ENCODE measurements at regions of chr19 and their contacts with region 1.

Region 1: DNA sequence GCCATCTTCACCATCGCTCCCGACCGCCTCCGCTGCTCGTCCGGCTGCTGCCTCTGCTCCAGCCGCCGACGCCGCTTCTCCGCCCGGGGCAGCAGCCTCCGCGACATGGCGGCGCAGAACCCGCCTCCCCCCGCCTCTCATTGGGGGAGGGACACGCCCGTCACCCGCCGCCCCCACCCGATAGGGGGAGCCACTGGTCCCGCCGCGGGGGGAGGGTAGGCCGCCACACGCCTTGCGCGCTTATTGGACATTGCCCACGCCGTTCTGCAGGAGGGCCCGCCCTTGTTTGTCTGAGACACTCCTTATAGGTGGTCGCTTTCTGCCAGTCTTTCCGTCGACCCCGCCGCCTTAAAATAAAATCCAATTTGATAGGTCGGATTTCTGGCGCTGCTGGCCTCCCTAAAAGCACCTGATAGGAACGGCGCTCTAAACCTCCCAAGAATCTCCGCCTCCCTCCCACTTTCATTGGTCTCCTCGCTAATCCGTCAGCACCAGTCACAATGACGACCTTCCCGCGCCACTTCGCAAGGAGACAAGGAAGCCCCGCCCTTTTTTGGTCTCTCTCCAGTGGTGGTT is at the start of gene HNRNPL:
- DNase-seq: peak in 6 of 9 experiments; percentile 98 to 100 (median 99)
- ATAC-seq: peak; percentile 68
- H3K4me3 ChIP-seq: peak within 1 kb of the TSS; percentile 70 to 72
- H3K4me3 Mint-ChIP-seq: peak within 1 kb of the TSS; percentile 97
- H3K27ac ChIP-seq: peak within 1 kb of the TSS; percentile 85 to 97
- H3K27ac Mint-ChIP-seq: peak within 1 kb of the TSS; percentile 99
- H3K4me1 ChIP-seq: peaks cover 54% of the 10 kb centered on the region
- H3K4me1 Mint-ChIP-seq: peaks cover 52% of the 10 kb centered on the region
- H3K27me3 ChIP-seq: no peaks in the 10 kb centered on the region
- H3K27me3 Mint-ChIP-seq: no peaks in the 10 kb centered on the region
- CTCF ChIP-seq: peak; percentile 21
- total RNA-seq, gene HNRNPL: 615 to 625 TPM

Region 2: GRCh38 chr19:38402967-38403861 is 446.7 kb before region 1 on chr19 and contains the start of gene FAM98C:
- CTCF ChIA-PET with region 1: no interaction called
- POLR2A ChIA-PET with region 1: no interaction called
- intact Hi-C with region 1: loop called in 1 of 2 experiments (anchors 1 kb)
- DNase-seq: peak; percentile 95 to 99 (median 97)
- ATAC-seq: peak; percentile 96
- H3K4me3 ChIP-seq: peak within 1 kb of the TSS; percentile 76 to 95
- H3K4me3 Mint-ChIP-seq: peak within 1 kb of the TSS; percentile 94
- H3K27ac ChIP-seq: peak within 1 kb of the TSS; percentile 79 to 81
- H3K27ac Mint-ChIP-seq: peak within 1 kb of the TSS; percentile 98
- H3K4me1 ChIP-seq: peaks cover 11% of the 10 kb centered on the region
- H3K4me1 Mint-ChIP-seq: peaks cover 15% of the 10 kb centered on the region
- H3K27me3 ChIP-seq: no peaks in the 10 kb centered on the region
- H3K27me3 Mint-ChIP-seq: no peaks in the 10 kb centered on the region
- CTCF ChIP-seq: peak; percentile 95
- total RNA-seq, gene FAM98C: 28.2 to 29.3 TPM

Region 3: DNA sequence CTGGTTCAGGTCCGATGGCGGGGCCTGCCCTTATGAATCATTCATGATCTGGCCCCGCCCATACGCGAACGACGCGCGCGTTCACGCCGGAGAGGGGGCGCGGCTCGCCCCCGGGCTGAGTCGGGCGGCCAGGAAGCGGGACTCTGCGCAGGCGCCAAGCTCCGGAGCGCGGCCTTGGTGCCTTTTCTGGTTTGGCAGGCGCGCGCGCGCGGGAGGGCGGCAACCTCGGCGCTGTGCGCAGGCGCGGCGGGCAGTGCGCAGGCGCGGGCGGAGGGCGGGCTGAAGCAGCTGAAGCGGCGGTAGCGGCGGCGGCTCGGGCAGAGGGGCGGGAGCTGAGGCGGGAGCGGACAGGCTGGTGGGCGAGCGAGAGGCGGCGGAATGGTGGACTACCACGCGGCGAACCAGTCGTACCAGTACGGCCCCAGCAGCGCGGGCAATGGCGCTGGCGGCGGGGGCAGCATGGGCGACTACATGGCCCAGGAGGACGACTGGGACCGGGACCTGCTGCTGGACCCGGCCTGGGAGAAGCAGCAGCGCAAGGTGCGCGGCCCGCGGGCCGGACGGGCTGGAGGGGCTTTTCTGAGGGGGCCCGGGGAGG is 202.5 kb before region 1 on chr19 and contains the start of gene ACTN4:
- CTCF ChIA-PET with region 1: no interaction called
- POLR2A ChIA-PET with region 1: interaction called, 3 read pairs
- intact Hi-C with region 1: loop called (anchors 1 kb)
- DNase-seq: peak; percentile 99 to 100 (median 100)
- ATAC-seq: peak; percentile 94
- H3K4me3 ChIP-seq: peak within 1 kb of the TSS; percentile 83 to 89
- H3K4me3 Mint-ChIP-seq: peak within 1 kb of the TSS; percentile 91
- H3K27ac ChIP-seq: peak within 1 kb of the TSS; percentile 49 to 63
- H3K27ac Mint-ChIP-seq: peak within 1 kb of the TSS; percentile 73
- H3K4me1 ChIP-seq: peaks cover 23% of the 10 kb centered on the region
- H3K4me1 Mint-ChIP-seq: peaks cover 32% of the 10 kb centered on the region
- H3K27me3 ChIP-seq: peaks cover 7 to 16% of the 10 kb centered on the region in 2 experiments
- H3K27me3 Mint-ChIP-seq: peaks cover 31% of the 10 kb centered on the region
- CTCF ChIP-seq: no peak
- total RNA-seq, gene ACTN4: 110 to 111 TPM

Region 4: GRCh38 chr19:38869856-38870607 is 20.1 kb after region 1 on chr19:
- CTCF ChIA-PET with region 1: interaction called, 28 read pairs
- POLR2A ChIA-PET with region 1: interaction called, 46 read pairs
- intact Hi-C with region 1: loop called (anchors 1 kb)
- DNase-seq: peak; percentile 89 to 98 (median 94)
- ATAC-seq: peak; percentile 88
- H3K4me3 ChIP-seq: peak overlapping the region; percentile 75 to 79
- H3K4me3 Mint-ChIP-seq: peak overlapping the region; percentile 84
- H3K27ac ChIP-seq: peak overlapping the region; percentile 50 to 79
- H3K27ac Mint-ChIP-seq: peak overlapping the region; percentile 89
- H3K4me1 ChIP-seq: peaks cover 46% of the 10 kb centered on the region
- H3K4me1 Mint-ChIP-seq: peaks cover 50% of the 10 kb centered on the region
- H3K27me3 ChIP-seq: no peaks in the 10 kb centered on the region
- H3K27me3 Mint-ChIP-seq: no peaks in the 10 kb centered on the region
- CTCF ChIP-seq: peak; percentile 84

Region 5: DNA sequence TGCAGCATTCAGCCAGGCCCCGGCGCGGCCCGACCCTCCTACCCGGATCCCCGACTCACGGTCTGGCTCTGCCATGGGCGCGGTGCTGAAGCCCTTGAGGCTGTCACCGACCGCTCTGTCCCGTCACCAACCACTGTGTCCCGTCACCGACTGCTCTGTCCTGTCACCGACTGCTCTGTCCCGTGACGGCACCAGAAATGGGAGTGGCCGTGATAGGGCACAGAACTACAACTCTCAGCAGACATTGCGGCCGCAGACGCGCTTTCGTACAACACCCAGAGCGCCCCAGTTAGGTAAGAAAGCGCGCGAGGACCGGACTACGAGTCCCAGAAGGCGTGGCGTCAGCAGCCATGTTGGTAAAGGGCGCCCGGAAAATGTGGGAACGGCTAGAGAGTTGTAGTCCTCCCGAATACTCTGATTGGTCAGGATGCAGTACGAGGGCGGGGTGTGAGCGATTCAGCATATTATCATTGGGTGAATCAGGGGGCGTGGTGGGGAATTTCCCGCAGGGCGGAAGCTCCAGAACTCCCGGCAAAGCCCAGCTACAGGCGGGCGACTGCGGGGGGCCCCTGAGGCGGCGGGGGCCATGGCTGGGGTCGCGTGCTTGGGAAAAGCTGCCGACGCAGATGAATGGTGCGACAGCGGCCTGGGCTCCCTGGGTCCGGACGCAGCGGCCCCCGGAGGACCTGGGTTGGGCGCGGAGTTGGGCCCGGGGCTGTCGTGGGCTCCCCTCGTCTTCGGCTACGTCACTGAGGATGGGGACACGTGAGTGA is 49.7 kb after region 1 on chr19 and contains the starts of genes NFKBIB and SIRT2:
- CTCF ChIA-PET with region 1: no interaction called
- POLR2A ChIA-PET with region 1: interaction called, 8 read pairs
- intact Hi-C with region 1: loop called (anchors 1 kb)
- DNase-seq: peak; percentile 97 to 100 (median 99)
- ATAC-seq: peak; percentile 85
- H3K4me3 ChIP-seq: peak within 1 kb of the TSS; percentile 68 to 88
- H3K4me3 Mint-ChIP-seq: peak within 1 kb of the TSS; percentile 93
- H3K27ac ChIP-seq: peak within 1 kb of the TSS; percentile 93 to 100
- H3K27ac Mint-ChIP-seq: peak within 1 kb of the TSS; percentile 98
- H3K4me1 ChIP-seq: peaks cover 23% of the 10 kb centered on the region
- H3K4me1 Mint-ChIP-seq: peaks cover 57% of the 10 kb centered on the region
- H3K27me3 ChIP-seq: no peaks in the 10 kb centered on the region
- H3K27me3 Mint-ChIP-seq: no peaks in the 10 kb centered on the region
- CTCF ChIP-seq: no peak
- total RNA-seq, gene NFKBIB: 62.9 to 66.1 TPM
- total RNA-seq, gene SIRT2: 90.6 to 95.1 TPM

Region 6: DNA sequence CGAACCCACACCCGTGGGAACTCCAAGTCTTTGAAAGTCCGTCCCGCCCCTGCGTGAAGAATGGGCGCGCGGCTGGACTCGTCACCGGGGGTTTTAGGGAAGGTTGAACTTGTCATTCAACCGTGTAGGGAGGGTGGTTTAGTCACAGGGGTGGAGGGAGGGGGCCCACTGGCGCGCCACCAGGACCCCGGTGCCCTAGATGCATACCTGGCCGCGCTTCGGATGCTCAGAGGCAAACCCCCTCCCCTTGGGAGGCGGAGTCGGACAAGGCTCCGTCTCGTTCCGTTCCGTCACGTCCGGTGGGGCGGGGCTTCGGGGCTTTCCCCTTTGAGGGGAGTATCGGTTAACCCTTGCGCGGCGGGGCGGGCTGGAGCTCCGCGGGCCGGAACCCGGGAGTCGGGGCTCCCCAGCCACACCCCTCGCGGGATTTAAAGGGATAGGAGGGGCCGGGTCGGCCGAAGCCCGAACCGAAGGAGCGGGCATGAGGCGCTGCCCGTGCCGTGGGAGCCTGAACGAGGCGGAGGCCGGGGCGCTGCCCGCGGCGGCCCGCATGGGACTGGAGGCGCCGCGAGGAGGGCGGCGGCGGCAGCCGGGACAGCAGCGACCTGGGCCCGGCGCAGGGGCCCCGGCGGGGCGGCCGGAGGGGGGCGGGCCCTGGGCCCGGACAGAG is 1866.8 kb after region 1 on chr19 and contains the starts of genes COQ8B and ITPKC:
- CTCF ChIA-PET with region 1: no interaction called
- POLR2A ChIA-PET with region 1: no interaction called
- intact Hi-C with region 1: loop called in 1 of 2 experiments (anchors 5 kb)
- DNase-seq: peak; percentile 98 to 100 (median 100)
- ATAC-seq: peak; percentile 74
- H3K4me3 ChIP-seq: peak within 1 kb of the TSS; percentile 66 to 93
- H3K4me3 Mint-ChIP-seq: peak within 1 kb of the TSS; percentile 88
- H3K27ac ChIP-seq: peak within 1 kb of the TSS; percentile 88 to 89
- H3K27ac Mint-ChIP-seq: peak within 1 kb of the TSS; percentile 97
- H3K4me1 ChIP-seq: peaks cover 61% of the 10 kb centered on the region
- H3K4me1 Mint-ChIP-seq: peaks cover 70% of the 10 kb centered on the region
- H3K27me3 ChIP-seq: no peaks in the 10 kb centered on the region
- H3K27me3 Mint-ChIP-seq: no peaks in the 10 kb centered on the region
- CTCF ChIP-seq: no peak
- total RNA-seq, gene COQ8B: 14.0 to 14.2 TPM
- total RNA-seq, gene ITPKC: 5.9 to 6.4 TPM